ENCODE measurements at regions of chr2 and their contacts with region 1.

Region 1: GRCh38 chr2:177983183-177983788 is 89.3 kb downstream of the PDE11A start:
- DNase-seq: peak; percentile 43
- H3K4me3 Mint-ChIP-seq: no peak overlapping the region
- H3K27ac Mint-ChIP-seq: no peak overlapping the region
- H3K4me1 Mint-ChIP-seq: no peaks in the 10 kb centered on the region
- H3K27me3 Mint-ChIP-seq: no peaks in the 10 kb centered on the region
- CTCF ChIP-seq: peak; percentile 70

Region 2: GRCh38 chr2:177666408-177666807 is 316.9 kb before region 1 on chr2:
- CTCF ChIA-PET with region 1: no interaction called
- intact Hi-C with region 1: no loop called
- DNase-seq: no peak
- H3K4me3 Mint-ChIP-seq: no peak overlapping the region
- H3K27ac Mint-ChIP-seq: no peak overlapping the region
- H3K4me1 Mint-ChIP-seq: no peaks in the 10 kb centered on the region
- H3K27me3 Mint-ChIP-seq: no peaks in the 10 kb centered on the region
- CTCF ChIP-seq: no peak

Region 3: DNA sequence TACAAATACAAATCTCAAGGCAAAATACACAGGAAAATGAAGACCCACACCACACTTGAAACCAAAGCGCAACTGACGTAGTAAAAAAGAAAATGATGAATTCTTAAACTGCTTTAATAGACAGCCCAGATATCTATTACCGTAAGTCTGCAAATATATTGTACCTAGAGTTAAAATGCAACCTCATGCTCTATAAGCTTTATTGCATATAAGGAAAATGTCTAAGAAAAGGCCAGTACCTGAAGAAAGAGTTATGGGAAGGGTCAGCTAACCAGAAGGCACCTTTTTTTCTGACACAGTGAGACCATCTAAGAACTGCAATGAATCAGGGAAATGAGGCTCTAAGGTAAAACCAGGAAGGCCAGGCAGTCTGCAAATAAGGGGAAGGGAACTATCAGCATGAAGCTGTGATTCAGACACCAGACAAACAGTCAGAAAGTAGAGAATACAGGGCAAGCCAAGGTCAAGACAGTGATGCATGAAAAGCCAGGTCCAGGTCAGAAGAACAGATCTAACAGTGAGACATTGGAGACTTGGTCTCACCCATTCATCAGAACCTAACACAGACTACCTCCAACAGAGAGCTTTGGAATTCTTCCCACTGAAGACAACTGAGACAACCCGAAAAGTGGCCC is 42.4 kb after region 1 on chr2:
- CTCF ChIA-PET with region 1: no interaction called
- intact Hi-C with region 1: no loop called
- DNase-seq: no peak
- H3K4me3 Mint-ChIP-seq: no peak overlapping the region
- H3K27ac Mint-ChIP-seq: no peak overlapping the region
- H3K4me1 Mint-ChIP-seq: no peaks in the 10 kb centered on the region
- H3K27me3 Mint-ChIP-seq: no peaks in the 10 kb centered on the region
- CTCF ChIP-seq: no peak

Region 4: DNA sequence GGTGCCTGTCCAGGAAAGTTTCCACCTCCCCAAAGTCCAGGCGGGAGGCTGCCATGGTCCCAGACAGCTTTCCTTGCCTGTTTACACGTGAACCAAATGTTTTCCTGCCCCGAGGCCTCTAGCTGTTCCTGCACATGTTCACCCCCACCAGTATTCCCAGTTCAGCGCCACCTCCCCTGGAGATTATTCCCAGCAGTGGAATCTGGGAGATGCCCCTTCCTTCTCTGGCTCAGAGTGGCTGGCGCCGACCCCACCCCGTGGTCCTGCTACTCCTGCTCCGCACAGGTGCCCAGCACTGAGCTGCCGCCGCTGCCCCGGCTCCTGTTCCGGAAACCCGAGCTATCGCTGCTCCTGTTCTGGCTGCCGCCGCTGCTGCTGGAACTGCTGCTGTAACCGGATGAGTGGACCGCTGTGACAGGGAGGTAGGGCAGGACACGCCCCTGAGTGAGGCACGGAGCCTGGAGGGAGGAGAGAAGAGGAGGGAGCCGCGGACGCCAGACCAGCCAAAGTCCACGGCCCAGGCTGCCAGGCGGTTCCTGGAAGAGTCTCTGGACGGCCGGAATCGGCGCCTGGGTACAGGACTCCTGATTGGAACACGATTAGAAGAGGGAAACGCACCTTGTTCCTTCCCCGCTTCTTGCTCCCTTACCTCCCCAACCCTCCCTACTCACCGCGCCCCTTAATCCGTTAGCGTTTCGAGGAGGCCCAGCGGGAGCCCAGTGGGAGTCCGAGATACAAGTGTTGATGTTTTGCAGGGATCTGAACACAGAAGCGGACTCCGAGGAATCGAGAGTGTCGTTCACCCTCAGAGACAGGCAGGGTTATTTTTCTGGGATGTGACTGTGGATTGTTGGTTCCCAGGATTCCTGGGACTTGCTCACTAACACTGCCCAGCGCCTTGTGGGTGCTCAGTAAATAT is 89.4 kb after region 1 on chr2 and contains the start of gene PDE11A:
- CTCF ChIA-PET with region 1: interaction called, 3 read pairs
- intact Hi-C with region 1: loop called (anchors 5 kb)
- DNase-seq: peak; percentile 90
- H3K4me3 Mint-ChIP-seq: peak within 1 kb of the TSS; percentile 83
- H3K27ac Mint-ChIP-seq: peak within 1 kb of the TSS; percentile 45
- H3K4me1 Mint-ChIP-seq: peaks cover 48% of the 10 kb centered on the region
- H3K27me3 Mint-ChIP-seq: no peaks in the 10 kb centered on the region
- CTCF ChIP-seq: no peak
- total RNA-seq, gene PDE11A: 1.4 and 2.1 TPM in 2 replicates

Region 5: GRCh38 chr2:178306352-178307073 is 323.2 kb after region 1 on chr2:
- CTCF ChIA-PET with region 1: no interaction called
- intact Hi-C with region 1: no loop called
- DNase-seq: peak; percentile 67
- H3K4me3 Mint-ChIP-seq: no peak overlapping the region
- H3K27ac Mint-ChIP-seq: no peak overlapping the region
- H3K4me1 Mint-ChIP-seq: no peaks in the 10 kb centered on the region
- H3K27me3 Mint-ChIP-seq: no peaks in the 10 kb centered on the region
- CTCF ChIP-seq: peak; percentile 46

Measured in Calu3 (cell line).